ENCODE measurements at regions of chr17 and their contacts with region 1.

Region 1: GRCh38 chr17:16486373-16487250 is 5.4 kb downstream of the LRRC75A start:
- DNase-seq: peak; percentile 61 to 85
- H3K4me3 ChIP-seq: peak overlapping the region; percentile 21 to 33
- H3K27ac ChIP-seq: peak overlapping the region; percentile 52 to 58
- H3K4me1 ChIP-seq: peaks cover 0 to 38% (median 24%) of the 10 kb centered on the region in 4 donors
- H3K27me3 ChIP-seq: peaks cover 0 to 7% of the 10 kb centered on the region in 2 donors
- CTCF ChIP-seq: no peak

Region 2: DNA sequence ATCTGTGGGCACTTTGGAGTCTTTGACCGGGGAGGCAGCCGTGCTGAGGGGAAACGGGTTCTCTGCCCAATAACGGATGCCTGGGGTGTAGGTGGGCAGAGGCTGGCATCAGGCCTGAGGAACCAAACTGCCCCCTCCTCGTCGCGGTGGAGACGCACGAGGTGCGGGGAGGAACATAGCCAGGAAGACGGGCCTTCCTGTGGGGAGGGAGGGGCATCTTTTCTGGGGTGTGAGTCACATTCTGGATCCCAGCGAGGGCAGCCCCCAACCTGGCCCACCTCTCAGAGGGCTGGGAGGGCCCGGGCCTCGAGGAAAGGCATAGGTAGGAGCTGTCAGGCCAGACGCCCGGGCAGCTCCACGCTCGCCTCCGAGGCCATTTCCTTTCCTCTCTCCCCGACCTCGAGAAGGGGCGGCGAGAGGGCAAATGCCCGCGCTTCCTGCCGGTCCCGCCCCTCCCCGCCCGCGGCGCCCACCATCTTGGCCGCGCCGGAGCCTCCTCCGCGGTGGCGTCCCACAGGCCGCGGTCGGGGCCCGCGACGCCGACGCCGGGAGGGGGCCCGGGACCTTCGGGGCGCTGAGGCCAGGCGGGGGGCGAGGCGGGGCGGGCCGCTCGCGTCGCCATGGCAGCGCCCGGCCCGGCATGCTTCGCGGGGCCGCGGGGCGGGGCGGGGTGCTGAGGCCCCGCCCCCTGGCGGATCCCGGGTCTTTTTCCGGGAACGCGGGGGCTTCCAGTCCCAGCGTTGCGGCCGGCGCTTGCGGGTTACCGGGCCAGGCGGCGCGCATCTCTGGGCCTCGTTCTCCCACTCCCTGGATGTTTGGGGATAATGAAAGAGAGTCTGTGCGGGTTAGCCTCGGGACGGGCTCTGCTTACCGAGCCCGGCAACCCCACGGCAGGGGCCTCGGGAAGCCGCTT is 1207.8 kb after region 1 on chr17:
- intact Hi-C with region 1: loop called (anchors 5 kb)
- DNase-seq: peak; percentile 77 to 88
- H3K4me3 ChIP-seq: peak overlapping the region; percentile 66 to 71
- H3K27ac ChIP-seq: peak overlapping the region; percentile 94 to 95
- H3K4me1 ChIP-seq: peaks cover 3 to 92% (median 66%) of the 10 kb centered on the region in 4 donors
- H3K27me3 ChIP-seq: no peaks in the 10 kb centered on the region
- CTCF ChIP-seq: no peak

Measured in tibial artery (tissue), 4 donors.